ENCODE measurements at regions of chr13 and their contacts with region 1.

Region 1: GRCh38 chr13:28557725-28558520 is 63.0 kb upstream of the FLT1 start:
- DNase-seq: no peak
- ATAC-seq: no peak
- H3K4me3 ChIP-seq: no peak overlapping the region
- H3K27ac ChIP-seq: no peak overlapping the region
- H3K4me1 ChIP-seq: no peaks in the 10 kb centered on the region
- H3K27me3 ChIP-seq: no peaks in the 10 kb centered on the region
- CTCF ChIP-seq: no peak

Region 2: DNA sequence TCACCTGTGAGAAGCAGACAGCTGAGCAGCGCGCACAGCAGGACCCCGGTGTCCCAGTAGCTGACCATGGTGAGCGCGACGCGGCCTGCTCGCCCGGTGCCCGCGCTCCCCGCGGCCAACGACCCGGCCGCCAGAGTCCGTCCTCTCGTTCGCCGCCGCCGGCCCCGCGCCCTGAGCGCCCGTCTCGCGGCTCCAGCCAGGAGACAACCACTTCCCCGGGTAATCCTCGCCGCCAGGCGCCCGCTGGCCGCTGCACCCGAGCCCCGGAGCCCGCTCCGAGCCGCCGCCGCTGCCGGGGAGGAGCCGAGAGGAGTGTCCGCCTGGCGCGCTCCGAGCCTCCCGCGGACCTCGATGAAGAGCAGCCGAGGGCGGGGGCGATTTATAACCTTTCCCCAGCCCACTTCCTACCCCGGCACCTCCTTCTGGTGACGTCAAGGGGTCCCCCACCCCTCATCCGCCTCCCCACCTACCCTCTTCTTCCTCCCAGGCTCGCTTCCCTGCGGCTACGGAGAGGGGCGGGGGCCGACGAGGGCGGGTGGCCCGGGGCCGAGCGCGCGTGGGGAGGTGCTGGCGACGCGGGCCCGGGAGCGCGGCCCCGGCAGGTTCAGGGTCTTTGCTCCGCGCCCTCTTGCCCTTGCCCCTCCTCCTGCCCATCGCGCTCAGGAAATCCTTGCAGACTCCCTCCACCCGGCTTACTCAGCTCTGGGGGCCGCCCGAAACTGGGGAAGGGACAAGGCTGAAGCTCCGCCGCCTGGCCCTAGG is 63.0 kb before region 1 on chr13 and contains the start of gene FLT1:
- CTCF ChIA-PET with region 1: no interaction called
- POLR2A ChIA-PET with region 1: no interaction called
- in situ Hi-C with region 1: no loop called
- intact Hi-C with region 1: no loop called
- DNase-seq: no peak
- ATAC-seq: peak; percentile 77
- H3K4me3 ChIP-seq: peak within 1 kb of the TSS; percentile 24 to 32; a peak in 3 of 4 replicates
- H3K27ac ChIP-seq: no peak within 1 kb of the TSS
- H3K4me1 ChIP-seq: no peaks in the 10 kb centered on the region
- H3K27me3 ChIP-seq: peaks cover 28% of the 10 kb centered on the region
- CTCF ChIP-seq: no peak
- total RNA-seq, gene FLT1: 0.15 TPM

Region 3: DNA sequence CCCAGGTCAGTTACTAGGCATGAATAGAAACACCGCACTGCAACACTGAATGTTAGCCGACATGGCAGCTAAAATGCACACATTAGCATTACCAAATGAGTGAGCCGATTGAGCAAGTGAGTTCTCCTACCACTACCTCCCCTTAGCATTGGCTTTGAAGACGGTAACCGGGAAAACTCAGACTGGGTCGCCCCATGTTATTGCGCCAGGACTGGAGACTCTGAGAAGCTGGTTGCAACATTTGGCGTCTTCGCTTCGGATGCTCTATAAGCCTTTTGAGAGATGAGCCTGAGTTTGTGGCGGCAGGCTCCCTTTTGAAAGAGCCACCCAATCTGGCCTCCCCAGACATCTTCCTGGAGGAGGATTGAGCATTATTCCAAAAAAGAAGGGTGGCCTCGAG is 32.5 kb after region 1 on chr13:
- CTCF ChIA-PET with region 1: no interaction called
- POLR2A ChIA-PET with region 1: interaction called, 12 read pairs
- in situ Hi-C with region 1: no loop called
- intact Hi-C with region 1: no loop called
- DNase-seq: no peak
- ATAC-seq: no peak
- H3K4me3 ChIP-seq: no peak overlapping the region
- H3K27ac ChIP-seq: no peak overlapping the region
- H3K4me1 ChIP-seq: no peaks in the 10 kb centered on the region
- H3K27me3 ChIP-seq: no peaks in the 10 kb centered on the region
- CTCF ChIP-seq: no peak

Measured in Panc1 (cell line).